Activated CD4-positive, alpha-beta memory T cell treated with anti-CD3 and anti-CD28 coated beads, Interleukin-2, amount 10 ng/mL, durations not matched to agents 7 days and 5 days (primary cell): ENCODE measurements at regions of chr1 and their contacts with region 1.

Region 1: DNA sequence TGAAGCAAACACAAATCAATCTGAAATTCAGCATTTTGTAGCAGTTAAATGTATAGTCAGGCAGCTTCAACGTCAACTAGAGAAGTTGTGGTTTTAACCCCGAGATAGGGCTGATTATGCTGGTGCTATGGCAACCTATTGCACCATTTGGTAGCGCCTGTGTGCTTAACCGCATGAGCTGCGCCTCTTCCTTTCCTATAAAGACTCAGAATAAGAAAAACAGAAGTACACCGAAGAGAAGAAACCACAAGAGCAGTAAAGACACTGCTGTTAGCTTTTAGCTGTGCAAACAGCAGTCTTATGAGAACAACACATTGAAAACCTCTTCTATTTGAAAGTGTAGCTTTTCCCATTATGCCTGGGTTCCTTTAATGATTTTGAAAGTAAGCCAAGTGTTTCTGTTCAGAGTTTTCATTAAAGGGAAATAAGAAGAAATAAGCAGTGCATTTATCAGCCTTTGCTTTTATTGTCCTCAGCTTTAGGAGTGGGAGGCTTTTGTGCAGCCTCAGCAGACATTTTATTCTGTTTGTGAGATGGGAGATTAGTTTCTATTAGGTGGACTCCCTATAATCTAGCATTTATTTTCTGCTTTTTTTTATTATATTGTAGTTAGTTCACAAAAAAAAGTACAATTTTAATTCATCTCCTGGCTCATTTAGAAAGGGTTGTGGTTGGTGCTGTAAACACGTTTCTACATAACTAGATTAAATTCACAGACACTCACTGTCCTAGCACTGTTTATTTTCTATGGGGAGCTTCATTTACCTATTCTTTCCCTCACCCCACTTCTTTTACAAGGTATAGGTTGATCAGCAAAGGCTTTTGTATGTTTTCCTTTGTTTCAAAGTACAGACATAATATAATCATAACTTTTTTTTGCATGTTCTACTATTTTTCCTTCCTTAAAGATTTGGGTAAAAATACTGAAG is 43.3 kb downstream of the PTPRC start:
- DNase-seq: peak; percentile 90
- H3K4me3 Mint-ChIP-seq: peak overlapping the region; percentile 58
- H3K27ac Mint-ChIP-seq: peak overlapping the region; percentile 94
- H3K4me1 Mint-ChIP-seq: peaks cover 85% of the 10 kb centered on the region
- H3K27me3 Mint-ChIP-seq: no peaks in the 10 kb centered on the region

Region 2: GRCh38 chr1:198157241-198157846 is 524.8 kb before region 1 on chr1:
- CTCF ChIA-PET with region 1: no interaction called
- POLR2A ChIA-PET with region 1: interaction called, 11 read pairs
- DNase-seq: peak; percentile 85
- H3K4me3 Mint-ChIP-seq: peak overlapping the region; percentile 96
- H3K27ac Mint-ChIP-seq: peak overlapping the region; percentile 94
- H3K4me1 Mint-ChIP-seq: peaks cover 31% of the 10 kb centered on the region
- H3K27me3 Mint-ChIP-seq: no peaks in the 10 kb centered on the region

Region 3: GRCh38 chr1:198612471-198613260 is 69.4 kb before region 1 on chr1:
- CTCF ChIA-PET with region 1: interaction called, 4 read pairs
- POLR2A ChIA-PET with region 1: interaction called, 28 read pairs
- DNase-seq: no peak
- H3K4me3 Mint-ChIP-seq: peak overlapping the region; percentile 79
- H3K27ac Mint-ChIP-seq: peak overlapping the region; percentile 93
- H3K4me1 Mint-ChIP-seq: peaks cover 70% of the 10 kb centered on the region
- H3K27me3 Mint-ChIP-seq: no peaks in the 10 kb centered on the region

Region 4: GRCh38 chr1:198638894-198639635 is 43.0 kb before region 1 on chr1 and contains the start of gene PTPRC:
- CTCF ChIA-PET with region 1: interaction called, 38 read pairs
- POLR2A ChIA-PET with region 1: interaction called, 288 read pairs
- DNase-seq: no peak
- H3K4me3 Mint-ChIP-seq: peak within 1 kb of the TSS; percentile 94
- H3K27ac Mint-ChIP-seq: peak within 1 kb of the TSS; percentile 98
- H3K4me1 Mint-ChIP-seq: peaks cover 50% of the 10 kb centered on the region
- H3K27me3 Mint-ChIP-seq: no peaks in the 10 kb centered on the region
- total RNA-seq, gene PTPRC: 724 to 731 TPM

Region 5: GRCh38 chr1:198657550-198658064 is 24.5 kb before region 1 on chr1:
- CTCF ChIA-PET with region 1: interaction called, 4 read pairs
- POLR2A ChIA-PET with region 1: interaction called, 240 read pairs
- DNase-seq: no peak
- H3K4me3 Mint-ChIP-seq: peak overlapping the region; percentile 65
- H3K27ac Mint-ChIP-seq: peak overlapping the region; percentile 81
- H3K4me1 Mint-ChIP-seq: peaks cover 71% of the 10 kb centered on the region
- H3K27me3 Mint-ChIP-seq: no peaks in the 10 kb centered on the region

Region 6: DNA sequence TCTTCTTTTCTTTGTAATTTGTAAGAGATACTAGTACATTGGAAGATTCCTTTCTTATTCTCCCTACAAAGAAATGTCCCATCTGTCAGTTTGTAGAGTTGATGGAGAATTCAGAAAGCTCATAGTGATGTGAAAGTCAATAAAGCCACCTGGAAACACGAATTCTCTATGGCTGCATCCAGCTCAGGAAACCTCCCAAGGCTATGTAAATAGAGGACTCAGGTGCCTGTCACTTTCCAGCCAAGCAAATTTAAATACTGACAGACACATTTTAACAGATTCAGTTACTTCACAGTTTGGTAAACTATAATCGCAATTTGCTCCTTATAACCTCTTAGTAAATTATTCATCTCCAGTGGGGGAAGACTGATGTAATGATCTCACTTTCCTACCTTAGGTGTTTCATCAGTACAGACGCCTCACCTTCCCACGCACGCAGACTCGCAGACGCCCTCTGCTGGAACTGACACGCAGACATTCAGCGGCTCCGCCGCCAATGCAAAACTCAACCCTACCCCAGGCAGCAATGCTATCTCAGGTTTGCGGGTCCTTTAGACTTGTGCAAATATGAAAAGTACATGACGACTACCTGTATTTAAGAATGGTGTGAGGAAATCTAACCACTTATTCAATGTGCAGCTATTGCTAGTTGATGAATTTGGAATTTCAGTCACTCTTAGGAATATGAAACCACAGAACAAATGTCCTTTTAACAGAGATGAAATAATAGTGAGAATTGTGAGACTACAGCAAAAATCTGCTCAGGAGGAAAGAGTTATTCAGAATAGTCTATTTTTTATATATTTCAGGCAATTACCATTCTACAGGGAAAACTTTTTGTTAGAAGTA is 17.3 kb after region 1 on chr1:
- CTCF ChIA-PET with region 1: interaction called, 5 read pairs
- POLR2A ChIA-PET with region 1: interaction called, 21 read pairs
- DNase-seq: peak; percentile 71
- H3K4me3 Mint-ChIP-seq: no peak overlapping the region
- H3K27ac Mint-ChIP-seq: peak overlapping the region; percentile 27
- H3K4me1 Mint-ChIP-seq: peaks cover 76% of the 10 kb centered on the region
- H3K27me3 Mint-ChIP-seq: no peaks in the 10 kb centered on the region

Region 7: GRCh38 chr1:198734323-198735008 is 52.4 kb after region 1 on chr1:
- CTCF ChIA-PET with region 1: no interaction called
- POLR2A ChIA-PET with region 1: no interaction called
- DNase-seq: no peak
- H3K4me3 Mint-ChIP-seq: no peak overlapping the region
- H3K27ac Mint-ChIP-seq: peak overlapping the region; percentile 59
- H3K4me1 Mint-ChIP-seq: peaks cover 63% of the 10 kb centered on the region
- H3K27me3 Mint-ChIP-seq: no peaks in the 10 kb centered on the region

Region 8: DNA sequence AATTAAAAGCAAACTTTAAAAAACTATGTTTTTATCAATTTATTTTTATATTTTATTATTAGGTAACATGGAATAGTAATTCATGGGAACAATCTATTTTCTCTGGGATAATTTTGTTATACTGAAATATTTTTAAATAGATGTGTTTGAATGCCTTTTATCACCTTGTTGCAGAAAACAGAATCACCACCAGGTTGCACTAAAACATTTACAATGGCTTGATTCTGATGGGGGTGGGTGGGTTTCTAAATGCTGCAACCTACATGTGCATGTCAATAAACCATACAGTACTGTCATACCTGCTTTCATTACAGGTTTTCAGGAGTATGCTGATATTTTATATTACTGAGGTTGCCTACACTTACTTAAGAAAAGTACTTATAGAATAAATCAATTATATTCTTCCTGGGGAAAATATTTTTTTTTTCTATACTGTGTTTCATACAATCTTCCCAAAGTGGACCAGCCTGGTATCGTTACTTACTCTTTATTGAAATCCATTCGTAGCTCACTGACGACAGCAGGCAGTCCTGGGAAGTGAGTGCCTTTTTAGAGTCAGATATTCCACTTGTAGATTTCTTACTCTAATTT is 89.6 kb after region 1 on chr1:
- CTCF ChIA-PET with region 1: no interaction called
- POLR2A ChIA-PET with region 1: no interaction called
- DNase-seq: no peak
- H3K4me3 Mint-ChIP-seq: no peak overlapping the region
- H3K27ac Mint-ChIP-seq: no peak overlapping the region
- H3K4me1 Mint-ChIP-seq: peaks cover 7% of the 10 kb centered on the region
- H3K27me3 Mint-ChIP-seq: peaks cover 5% of the 10 kb centered on the region